Natural killer cell (primary cell): ENCODE measurements at regions of chr9 and their contacts with region 1.

Region 1: GRCh38 chr9:127734747-127735529 is at the start of gene TOR2A:
- DNase-seq: peak; percentile 100
- ATAC-seq: peak; percentile 90 to 98 (median 90)
- H3K4me3 ChIP-seq: peak within 1 kb of the TSS; percentile 50
- H3K4me3 Mint-ChIP-seq: peak within 1 kb of the TSS; percentile 92
- H3K27ac ChIP-seq: peak within 1 kb of the TSS; percentile 93
- H3K27ac Mint-ChIP-seq: peak within 1 kb of the TSS; percentile 93 to 96
- H3K4me1 ChIP-seq: peaks cover 22% of the 10 kb centered on the region
- H3K4me1 Mint-ChIP-seq: peaks cover 5 to 24% of the 10 kb centered on the region in 2 donors
- H3K27me3 ChIP-seq: no peaks in the 10 kb centered on the region
- H3K27me3 Mint-ChIP-seq: no peaks in the 10 kb centered on the region
- CTCF ChIP-seq: peak; percentile 71
- total RNA-seq, gene TOR2A: 20.9 to 27.8 (median 23.7) TPM

Region 2: DNA sequence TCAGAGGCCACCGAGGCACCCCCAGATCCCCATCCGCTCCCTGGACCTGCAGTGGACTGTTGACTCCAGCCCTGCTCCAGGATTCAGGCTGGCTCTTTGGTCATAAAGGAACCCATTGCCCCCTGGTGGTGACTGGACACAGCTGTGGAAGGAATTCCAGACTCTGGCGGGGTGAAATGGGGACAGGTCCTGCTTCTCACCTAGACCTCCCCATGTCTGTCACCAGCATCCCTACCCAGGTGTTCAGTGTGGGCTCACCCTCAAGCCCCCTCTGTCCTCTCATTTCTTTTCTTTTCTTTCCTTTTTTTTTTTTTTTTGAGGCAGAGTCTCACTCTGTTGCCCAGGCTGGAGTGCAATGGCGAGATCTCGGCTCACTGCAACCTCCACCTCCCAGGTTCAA is 148.4 kb before region 1 on chr9:
- intact Hi-C with region 1: loop called (anchors 1 kb)
- DNase-seq: peak; percentile 43 to 82
- ATAC-seq: peak; percentile 48 to 76 (median 75)
- H3K4me3 ChIP-seq: no peak overlapping the region
- H3K4me3 Mint-ChIP-seq: no peak overlapping the region
- H3K27ac ChIP-seq: no peak overlapping the region
- H3K27ac Mint-ChIP-seq: no peak overlapping the region
- H3K4me1 ChIP-seq: no peaks in the 10 kb centered on the region
- H3K4me1 Mint-ChIP-seq: no peaks in the 10 kb centered on the region
- H3K27me3 ChIP-seq: peaks cover 2% of the 10 kb centered on the region
- H3K27me3 Mint-ChIP-seq: no peaks in the 10 kb centered on the region
- CTCF ChIP-seq: peak; percentile 65

Region 3: GRCh38 chr9:127698985-127699670 is 35.8 kb before region 1 on chr9:
- intact Hi-C with region 1: loop called (anchors 2 kb)
- DNase-seq: peak; percentile 89 to 92
- ATAC-seq: peak; percentile 97 to 99 (median 98)
- H3K4me3 ChIP-seq: peak overlapping the region; percentile 25
- H3K4me3 Mint-ChIP-seq: peak overlapping the region; percentile 72
- H3K27ac ChIP-seq: peak overlapping the region; percentile 73
- H3K27ac Mint-ChIP-seq: peak overlapping the region; percentile 84 to 97
- H3K4me1 ChIP-seq: peaks cover 13% of the 10 kb centered on the region
- H3K4me1 Mint-ChIP-seq: peaks cover 8 to 15% of the 10 kb centered on the region in 2 donors
- H3K27me3 ChIP-seq: no peaks in the 10 kb centered on the region
- H3K27me3 Mint-ChIP-seq: no peaks in the 10 kb centered on the region
- CTCF ChIP-seq: no peak

Region 4: DNA sequence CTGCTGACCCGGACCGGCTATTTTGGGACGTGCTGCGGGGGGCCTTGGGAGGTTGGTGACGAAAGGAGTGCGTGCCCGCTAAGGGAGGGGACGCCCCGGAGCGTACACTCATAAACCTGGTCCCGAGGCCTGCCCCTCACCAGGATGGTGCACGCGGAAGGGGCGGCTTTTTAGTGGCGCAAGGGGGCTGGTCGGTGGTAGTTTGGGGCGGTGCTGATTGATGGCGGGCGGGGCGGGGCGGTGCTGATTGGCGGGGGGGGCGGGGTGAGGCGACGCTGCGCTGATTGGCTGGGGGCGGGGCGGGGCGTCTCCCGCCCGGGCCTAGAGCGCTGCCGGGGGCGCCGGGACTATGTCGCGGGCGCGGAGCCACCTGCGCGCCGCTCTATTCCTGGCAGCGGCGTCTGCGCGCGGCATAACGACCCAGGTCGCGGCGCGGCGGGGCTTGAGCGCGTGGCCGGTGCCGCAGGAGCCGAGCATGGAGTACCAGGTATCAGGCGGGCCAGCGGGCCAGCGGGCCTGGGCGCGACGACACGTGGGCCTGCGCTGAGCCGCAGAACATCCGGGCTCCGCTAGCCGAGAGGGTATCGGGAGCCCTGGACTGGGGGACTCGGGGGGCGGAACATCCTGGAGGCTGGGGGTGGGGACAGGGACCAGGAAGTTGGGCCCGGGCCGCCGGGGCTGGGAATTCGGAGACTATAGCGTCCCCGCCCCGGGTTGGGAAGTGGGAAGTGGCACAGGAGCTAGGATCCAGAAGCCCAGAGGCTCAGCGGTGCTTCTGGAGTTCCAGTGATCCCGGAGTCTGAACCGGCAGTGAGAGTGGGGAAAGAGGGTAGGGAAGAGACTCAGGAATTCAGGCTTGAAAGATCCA is 67.9 kb after region 1 on chr9 and contains the start of gene FPGS:
- intact Hi-C with region 1: loop called (anchors 1 kb)
- DNase-seq: peak; percentile 78 to 92
- ATAC-seq: peak; percentile 81 to 95 (median 86)
- H3K4me3 ChIP-seq: peak within 1 kb of the TSS; percentile 97
- H3K4me3 Mint-ChIP-seq: peak within 1 kb of the TSS; percentile 91
- H3K27ac ChIP-seq: peak within 1 kb of the TSS; percentile 90
- H3K27ac Mint-ChIP-seq: peak within 1 kb of the TSS; percentile 84 to 94
- H3K4me1 ChIP-seq: peaks cover 29% of the 10 kb centered on the region
- H3K4me1 Mint-ChIP-seq: peaks cover 18 to 30% of the 10 kb centered on the region in 2 donors
- H3K27me3 ChIP-seq: no peaks in the 10 kb centered on the region
- H3K27me3 Mint-ChIP-seq: no peaks in the 10 kb centered on the region
- CTCF ChIP-seq: no peak
- total RNA-seq, gene FPGS: 99.1 to 108 (median 107) TPM

Region 5: DNA sequence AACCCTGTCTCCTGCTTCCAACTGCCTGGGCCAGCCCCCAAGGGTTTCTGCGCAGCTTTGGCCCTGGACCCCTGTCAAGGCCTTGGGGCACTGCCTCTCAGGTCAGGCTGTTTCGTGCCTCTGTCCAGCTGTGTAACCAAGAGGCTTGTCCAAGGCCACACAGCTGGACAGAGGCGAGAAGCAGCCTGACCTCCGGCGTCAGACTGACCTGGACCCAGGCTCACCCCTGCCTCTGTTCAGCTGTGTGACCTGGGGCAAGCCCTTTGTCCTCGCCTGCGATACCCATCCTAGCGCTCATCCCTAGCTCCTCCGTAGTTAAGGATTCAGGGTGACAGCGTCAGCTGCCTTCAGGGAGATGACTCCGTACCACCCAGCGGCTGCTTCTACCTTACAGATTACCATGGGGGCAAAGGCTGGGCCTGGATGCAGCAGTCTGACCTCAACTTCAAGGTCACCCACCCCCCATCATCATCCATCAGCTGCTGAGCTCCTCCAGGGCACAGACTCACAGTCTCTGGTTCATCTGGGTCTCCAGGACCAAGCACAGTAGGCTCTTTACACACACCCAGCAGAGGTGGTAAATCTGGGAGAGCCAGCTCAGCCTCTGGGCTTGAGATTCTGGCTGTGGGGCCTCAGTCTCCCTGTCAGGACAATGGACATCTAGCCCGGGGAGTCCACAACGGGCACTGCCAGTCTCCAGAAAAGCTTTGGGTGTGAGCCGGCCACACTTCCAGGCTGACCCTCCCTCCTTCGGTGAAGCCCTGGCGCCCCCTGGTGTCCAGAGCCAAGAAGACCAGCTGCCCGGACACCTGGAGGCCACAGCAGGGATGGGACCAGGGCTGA is 134.6 kb after region 1 on chr9:
- intact Hi-C with region 1: loop called (anchors 2 kb)
- DNase-seq: peak; percentile 81 to 85
- ATAC-seq: peak; percentile 85 to 90 (median 88)
- H3K4me3 ChIP-seq: no peak overlapping the region
- H3K4me3 Mint-ChIP-seq: no peak overlapping the region
- H3K27ac ChIP-seq: no peak overlapping the region
- H3K27ac Mint-ChIP-seq: peak overlapping the region; percentile 56
- H3K4me1 ChIP-seq: peaks cover 24% of the 10 kb centered on the region
- H3K4me1 Mint-ChIP-seq: peaks cover 6 to 14% of the 10 kb centered on the region in 2 donors
- H3K27me3 ChIP-seq: no peaks in the 10 kb centered on the region
- H3K27me3 Mint-ChIP-seq: no peaks in the 10 kb centered on the region
- CTCF ChIP-seq: peak; percentile 95

Region 6: GRCh38 chr9:127980706-127981558 is 246.0 kb after region 1 on chr9 and contains the start of gene EEIG1:
- intact Hi-C with region 1: no loop called
- DNase-seq: peak; percentile 97
- ATAC-seq: peak; percentile 96 to 100 (median 97)
- H3K4me3 ChIP-seq: peak within 1 kb of the TSS; percentile 60
- H3K4me3 Mint-ChIP-seq: peak within 1 kb of the TSS; percentile 87
- H3K27ac ChIP-seq: peak within 1 kb of the TSS; percentile 62
- H3K27ac Mint-ChIP-seq: peak within 1 kb of the TSS; percentile 59 to 91
- H3K4me1 ChIP-seq: peaks cover 69% of the 10 kb centered on the region
- H3K4me1 Mint-ChIP-seq: peaks cover 5 to 22% of the 10 kb centered on the region in 2 donors
- H3K27me3 ChIP-seq: no peaks in the 10 kb centered on the region
- H3K27me3 Mint-ChIP-seq: no peaks in the 10 kb centered on the region
- CTCF ChIP-seq: no peak
- total RNA-seq, gene EEIG1: 10.3 to 36.0 (median 28.2) TPM